OCI-LY7 (cell line): ENCODE measurements at regions of chr1 and their contacts with region 1.

Region 1: GRCh38 chr1:149962123-149962548 is 25.5 kb upstream of the MTMR11 start:
- DNase-seq: peak; percentile 80
- H3K4me3 ChIP-seq: no peak overlapping the region
- H3K27ac ChIP-seq: no peak overlapping the region
- H3K4me1 ChIP-seq: peaks cover 4% of the 10 kb centered on the region
- CTCF ChIP-seq: peak; percentile 93

Region 2: DNA sequence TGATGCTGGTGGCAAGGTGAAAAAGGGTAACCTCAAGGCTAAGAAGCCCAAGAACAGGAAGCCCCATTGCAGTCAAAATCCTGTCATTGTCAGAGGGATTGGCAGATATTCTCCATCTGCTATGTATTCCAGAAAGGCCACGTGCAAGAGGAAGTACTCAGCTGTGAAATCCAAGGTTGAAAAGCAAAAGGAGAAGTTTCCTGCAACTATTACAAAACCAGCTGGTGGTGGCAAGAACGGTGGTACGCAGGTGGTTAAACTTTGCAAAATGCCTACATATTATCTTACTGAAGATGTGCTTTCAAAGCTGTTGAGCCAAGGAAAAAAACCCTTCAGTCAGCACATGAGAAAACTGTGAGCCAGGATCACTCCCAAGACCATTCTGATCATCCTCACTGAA is 91.8 kb after region 1 on chr1:
- CTCF ChIA-PET with region 1: interaction called, 3 read pairs
- POLR2A ChIA-PET with region 1: no interaction called
- intact Hi-C with region 1: loop called (anchors 1 kb)
- DNase-seq: peak; percentile 6
- H3K4me3 ChIP-seq: no peak overlapping the region
- H3K27ac ChIP-seq: no peak overlapping the region
- H3K4me1 ChIP-seq: peaks cover 19% of the 10 kb centered on the region
- CTCF ChIP-seq: no peak

Region 3: GRCh38 chr1:150168960-150169601 is 206.9 kb after region 1 on chr1:
- CTCF ChIA-PET with region 1: interaction called, 5 read pairs
- POLR2A ChIA-PET with region 1: no interaction called
- intact Hi-C with region 1: loop called (anchors 1 kb)
- DNase-seq: peak; percentile 68
- H3K4me3 ChIP-seq: no peak overlapping the region
- H3K27ac ChIP-seq: no peak overlapping the region
- H3K4me1 ChIP-seq: peaks cover 22% of the 10 kb centered on the region
- CTCF ChIP-seq: peak; percentile 90

Region 4: DNA sequence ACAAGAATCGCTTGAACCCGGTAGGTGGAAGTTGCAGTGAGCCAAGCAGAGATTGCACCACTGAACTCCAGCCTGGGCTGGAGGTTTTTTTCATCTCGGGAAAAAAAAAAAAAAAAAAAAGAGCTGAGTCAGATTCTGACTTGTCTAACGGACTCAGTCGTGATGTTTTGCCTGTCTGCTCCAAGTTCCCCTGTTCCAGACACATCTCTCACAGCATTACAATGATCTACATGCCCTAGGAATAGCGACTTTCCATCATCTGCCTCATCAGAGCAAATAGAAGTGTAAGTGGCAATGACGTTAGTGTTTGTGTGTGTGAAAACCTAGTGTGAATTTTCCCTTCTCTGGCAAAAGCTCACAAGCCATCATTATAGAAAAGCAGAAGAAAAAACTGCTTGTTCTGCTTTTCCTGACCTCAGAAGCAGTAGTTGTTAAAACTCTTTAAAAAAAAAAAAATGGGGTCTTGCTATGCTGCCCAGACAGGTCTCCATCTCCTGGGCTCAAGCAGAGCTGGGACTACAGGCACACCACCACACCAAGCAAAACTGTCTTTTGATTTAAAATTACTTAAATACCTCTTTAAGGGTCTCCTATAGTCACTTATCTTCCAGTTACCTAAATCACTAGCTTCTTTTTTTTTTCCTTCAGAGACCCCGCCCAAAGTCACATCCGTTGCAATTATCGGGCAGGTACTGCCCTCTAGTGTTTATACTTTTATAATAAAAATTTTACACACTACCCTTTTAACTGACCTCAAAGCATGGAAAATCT is 224.8 kb after region 1 on chr1:
- CTCF ChIA-PET with region 1: interaction called, 3 read pairs
- POLR2A ChIA-PET with region 1: interaction called, 4 read pairs
- intact Hi-C with region 1: loop called (anchors 1 kb)
- DNase-seq: peak; percentile 80
- H3K4me3 ChIP-seq: no peak overlapping the region
- H3K27ac ChIP-seq: no peak overlapping the region
- H3K4me1 ChIP-seq: peaks cover 11% of the 10 kb centered on the region
- CTCF ChIP-seq: peak; percentile 89